ENCODE measurements at regions of chr3 and their contacts with region 1.

Region 1: GRCh38 chr3:30180310-30181177 is 425.9 kb upstream of the TGFBR2 start:
- DNase-seq: no peak
- ATAC-seq: peak in 1 of 4 donors; percentile 43
- H3K4me3 ChIP-seq: no peak overlapping the region
- H3K27ac ChIP-seq: no peak overlapping the region
- H3K4me1 ChIP-seq: peaks cover 0 to 15% (median 0%) of the 10 kb centered on the region in 12 donors
- H3K27me3 ChIP-seq: no peaks in the 10 kb centered on the region
- CTCF ChIP-seq: no peak
- POLR2A ChIP-seq: no peak

Region 2: GRCh38 chr3:30135190-30135589 is 45.4 kb before region 1 on chr3:
- intact Hi-C with region 1: loop called in 2 of 10 experiments (anchors 5 to 10 kb)
- DNase-seq: no peak
- ATAC-seq: peak in 3 of 4 donors; percentile 48 to 77 (median 52)
- H3K4me3 ChIP-seq: no peak overlapping the region
- H3K27ac ChIP-seq: no peak overlapping the region
- H3K4me1 ChIP-seq: peaks cover 0 to 5% (median 1%) of the 10 kb centered on the region in 12 donors
- H3K27me3 ChIP-seq: no peaks in the 10 kb centered on the region
- CTCF ChIP-seq: peak in 10 of 12 donors; percentile 26 to 63 (median 42)
- POLR2A ChIP-seq: no peak

Region 3: GRCh38 chr3:30248423-30248822 is 67.9 kb after region 1 on chr3:
- intact Hi-C with region 1: no loop called
- DNase-seq: no peak
- ATAC-seq: no peak
- H3K4me3 ChIP-seq: no peak overlapping the region
- H3K27ac ChIP-seq: no peak overlapping the region
- H3K4me1 ChIP-seq: peaks cover 0 to 4% (median 0%) of the 10 kb centered on the region in 12 donors
- H3K27me3 ChIP-seq: no peaks in the 10 kb centered on the region
- CTCF ChIP-seq: no peak
- POLR2A ChIP-seq: no peak

Measured in heart left ventricle (tissue), 16 donors.